PC-9 (cell line): ENCODE measurements at regions of chr3 and their contacts with region 1.

Region 1: GRCh38 chr3:158109804-158110657 is at the start of gene RSRC1:
- DNase-seq: peak; percentile 87 to 88
- H3K4me3 ChIP-seq: peak within 1 kb of the TSS; percentile 84
- H3K27ac ChIP-seq: peak within 1 kb of the TSS; percentile 83
- H3K4me1 ChIP-seq: peaks cover 28% of the 10 kb centered on the region
- H3K27me3 ChIP-seq: no peaks in the 10 kb centered on the region
- CTCF ChIP-seq: 0 out of 2 replicates have a peak, but pooled peaks have one; percentile 9
- total RNA-seq, gene RSRC1: 43.1 and 60.3 TPM in 2 replicates

Region 2: GRCh38 chr3:157606011-157606851 is 503.8 kb before region 1 on chr3:
- CTCF ChIA-PET with region 1: interaction called, 11 read pairs
- POLR2A ChIA-PET with region 1: no interaction called
- intact Hi-C with region 1: no loop called
- DNase-seq: peak; percentile 45 to 68
- H3K4me3 ChIP-seq: no peak overlapping the region
- H3K27ac ChIP-seq: no peak overlapping the region
- H3K4me1 ChIP-seq: no peaks in the 10 kb centered on the region
- H3K27me3 ChIP-seq: no peaks in the 10 kb centered on the region
- CTCF ChIP-seq: peak; percentile 91

Region 3: DNA sequence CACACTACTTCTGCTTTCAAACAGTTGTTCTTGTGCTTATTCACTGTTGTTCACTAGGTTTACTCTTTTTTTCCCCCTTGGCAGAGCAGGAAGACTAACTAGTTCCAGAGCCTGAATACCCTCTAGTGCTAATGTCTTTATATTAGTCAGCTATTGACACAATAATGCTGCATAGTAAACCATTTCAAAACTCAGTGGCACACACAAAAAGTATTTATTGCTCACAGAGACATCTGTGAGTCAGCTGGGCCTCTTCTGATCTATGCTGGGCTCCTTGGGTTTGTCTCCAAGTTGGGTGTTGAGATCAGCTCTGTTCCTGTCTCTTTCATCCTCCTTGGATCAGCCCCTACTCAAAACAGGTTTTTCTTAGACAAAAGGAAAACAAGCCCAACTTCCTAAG is 50.9 kb after region 1 on chr3:
- CTCF ChIA-PET with region 1: no interaction called
- POLR2A ChIA-PET with region 1: interaction called, 33 read pairs
- intact Hi-C with region 1: no loop called
- DNase-seq: peak in 1 of 2 experiments; percentile 87
- H3K4me3 ChIP-seq: no peak overlapping the region
- H3K27ac ChIP-seq: peak overlapping the region; percentile 44
- H3K4me1 ChIP-seq: peaks cover 20% of the 10 kb centered on the region
- H3K27me3 ChIP-seq: no peaks in the 10 kb centered on the region
- CTCF ChIP-seq: no peak

Region 4: DNA sequence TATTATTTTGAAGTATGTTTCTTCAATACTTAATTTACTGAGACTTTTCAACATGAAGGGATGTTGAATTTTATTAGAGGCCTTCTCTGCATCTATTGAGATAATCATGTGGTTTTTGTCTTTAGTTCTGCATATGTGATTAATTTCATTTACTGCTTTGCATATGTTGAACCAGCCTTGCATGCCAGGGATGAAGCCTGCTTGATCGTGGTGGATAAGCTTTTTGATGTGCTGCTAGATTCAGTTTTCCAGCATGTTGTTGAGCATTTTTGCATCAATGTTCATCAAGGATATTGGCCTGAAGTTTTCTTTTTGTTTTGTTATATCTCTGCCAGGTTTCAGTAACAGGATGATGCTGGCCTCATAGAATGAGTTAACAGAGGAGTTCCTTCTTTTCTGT is 134.2 kb after region 1 on chr3:
- CTCF ChIA-PET with region 1: no interaction called
- POLR2A ChIA-PET with region 1: interaction called, 15 read pairs
- intact Hi-C with region 1: no loop called
- DNase-seq: no peak
- H3K4me3 ChIP-seq: no peak overlapping the region
- H3K27ac ChIP-seq: no peak overlapping the region
- H3K4me1 ChIP-seq: no peaks in the 10 kb centered on the region
- H3K27me3 ChIP-seq: no peaks in the 10 kb centered on the region
- CTCF ChIP-seq: no peak

Region 5: DNA sequence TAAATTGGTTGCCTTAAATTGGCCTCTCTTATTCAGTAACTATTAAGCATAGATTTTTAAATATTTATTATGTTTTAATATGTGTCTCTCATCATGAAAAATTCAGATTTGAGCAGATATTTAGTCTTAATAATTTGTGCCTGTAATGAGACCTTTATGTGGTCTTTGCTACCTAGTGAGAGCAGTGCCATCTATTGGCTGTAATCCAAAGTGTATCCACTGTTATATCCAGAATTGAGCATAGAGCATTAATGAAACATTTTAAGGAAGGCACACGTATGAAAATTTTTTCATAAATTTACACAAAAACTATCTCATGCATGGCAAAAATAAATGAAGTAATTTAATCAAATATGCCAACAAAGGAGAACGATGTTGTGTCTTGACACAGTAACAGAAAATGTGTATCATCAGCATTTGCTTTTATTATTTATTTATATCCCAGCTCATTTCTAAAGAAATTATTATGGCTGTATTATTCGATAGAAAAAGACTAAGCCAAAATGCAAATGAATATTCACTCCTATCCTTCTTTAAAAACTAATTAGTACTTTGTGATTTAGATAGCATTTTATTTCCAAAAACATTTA is 203.4 kb after region 1 on chr3:
- CTCF ChIA-PET with region 1: no interaction called
- POLR2A ChIA-PET with region 1: interaction called, 19 read pairs
- intact Hi-C with region 1: no loop called
- DNase-seq: no peak
- H3K4me3 ChIP-seq: no peak overlapping the region
- H3K27ac ChIP-seq: no peak overlapping the region
- H3K4me1 ChIP-seq: no peaks in the 10 kb centered on the region
- H3K27me3 ChIP-seq: no peaks in the 10 kb centered on the region
- CTCF ChIP-seq: peak; percentile 79

Region 6: GRCh38 chr3:158434412-158435038 is 324.5 kb after region 1 on chr3:
- CTCF ChIA-PET with region 1: no interaction called
- POLR2A ChIA-PET with region 1: no interaction called
- intact Hi-C with region 1: loop called (anchors 10 kb)
- DNase-seq: peak; percentile 37 to 42
- H3K4me3 ChIP-seq: no peak overlapping the region
- H3K27ac ChIP-seq: no peak overlapping the region
- H3K4me1 ChIP-seq: no peaks in the 10 kb centered on the region
- H3K27me3 ChIP-seq: no peaks in the 10 kb centered on the region
- CTCF ChIP-seq: peak; percentile 87